ENCODE measurements at regions of chr12 and their contacts with region 1.

Region 1: GRCh38 chr12:12562585-12563261 is at the start of gene DUSP16:
- DNase-seq: peak; percentile 55 to 92 (median 77)
- ATAC-seq: peak; percentile 66 to 80 (median 69)
- H3K4me3 ChIP-seq: peak within 1 kb of the TSS; percentile 90 to 93
- H3K4me3 Mint-ChIP-seq: peak within 1 kb of the TSS; percentile 83 to 89 (median 85)
- H3K27ac ChIP-seq: peak within 1 kb of the TSS; percentile 100
- H3K27ac Mint-ChIP-seq: peak within 1 kb of the TSS; percentile 92 to 93
- H3K4me1 ChIP-seq: peaks cover 8 to 18% of the 10 kb centered on the region in 2 experiments
- H3K4me1 Mint-ChIP-seq: peaks cover 37 to 46% (median 40%) of the 10 kb centered on the region in 3 donors
- H3K27me3 ChIP-seq: no peaks in the 10 kb centered on the region
- H3K27me3 Mint-ChIP-seq: no peaks in the 10 kb centered on the region
- total RNA-seq, gene DUSP16: 44.6 to 72.3 (median 61.0) TPM

Region 2: DNA sequence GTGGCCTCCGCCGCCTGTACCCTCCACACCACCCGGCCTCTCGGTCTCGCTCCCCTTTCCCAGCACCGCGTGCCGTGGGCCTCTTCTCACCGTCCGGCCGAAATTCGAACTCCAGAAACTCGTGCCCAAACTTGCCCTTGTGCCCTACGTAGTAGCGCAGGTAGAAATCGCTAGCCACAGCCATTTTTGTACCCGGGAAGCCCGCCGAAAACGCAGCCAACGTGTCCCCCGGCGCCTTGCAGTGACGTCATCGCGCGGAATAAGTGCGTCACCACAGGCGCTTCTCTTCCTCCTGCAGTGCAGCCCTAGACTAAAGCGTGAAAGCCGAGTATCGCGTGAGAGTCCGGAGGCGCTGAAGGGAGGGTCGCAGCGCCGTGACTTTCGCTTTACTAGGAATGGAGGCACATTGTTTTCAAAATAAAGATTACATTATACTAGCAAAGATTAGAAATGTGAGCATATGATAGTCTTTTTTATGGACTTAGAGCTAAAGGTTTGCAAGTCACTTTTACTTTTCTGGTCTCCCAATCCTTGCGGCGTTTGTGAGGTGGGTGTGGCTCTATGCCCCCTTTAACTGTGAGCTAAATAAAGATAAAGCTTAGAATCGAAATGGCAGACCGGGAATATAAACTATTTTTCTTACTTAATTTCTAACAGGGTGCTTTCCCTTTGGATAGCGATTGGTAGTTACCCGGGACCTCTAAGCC is 1949.2 kb before region 1 on chr12 and contains the start of gene MAGOHB:
- CTCF ChIA-PET with region 1: no interaction called
- POLR2A ChIA-PET with region 1: interaction called in 1 of 2 experiments, 10 read pairs
- DNase-seq: peak; percentile 93 to 99 (median 97)
- ATAC-seq: peak; percentile 94 to 98 (median 96)
- H3K4me3 ChIP-seq: peak within 1 kb of the TSS; percentile 87 to 88
- H3K4me3 Mint-ChIP-seq: peak within 1 kb of the TSS; percentile 92 to 99 (median 97)
- H3K27ac ChIP-seq: peak within 1 kb of the TSS; percentile 94
- H3K27ac Mint-ChIP-seq: peak within 1 kb of the TSS; percentile 98 to 99
- H3K4me1 ChIP-seq: peaks cover 8 to 12% of the 10 kb centered on the region in 2 experiments
- H3K4me1 Mint-ChIP-seq: peaks cover 25 to 31% (median 29%) of the 10 kb centered on the region in 3 donors
- H3K27me3 ChIP-seq: no peaks in the 10 kb centered on the region
- H3K27me3 Mint-ChIP-seq: peaks cover 0 to 12% of the 10 kb centered on the region in 2 donors
- total RNA-seq, gene MAGOHB: 11.6 to 22.9 (median 20.3) TPM

Region 3: DNA sequence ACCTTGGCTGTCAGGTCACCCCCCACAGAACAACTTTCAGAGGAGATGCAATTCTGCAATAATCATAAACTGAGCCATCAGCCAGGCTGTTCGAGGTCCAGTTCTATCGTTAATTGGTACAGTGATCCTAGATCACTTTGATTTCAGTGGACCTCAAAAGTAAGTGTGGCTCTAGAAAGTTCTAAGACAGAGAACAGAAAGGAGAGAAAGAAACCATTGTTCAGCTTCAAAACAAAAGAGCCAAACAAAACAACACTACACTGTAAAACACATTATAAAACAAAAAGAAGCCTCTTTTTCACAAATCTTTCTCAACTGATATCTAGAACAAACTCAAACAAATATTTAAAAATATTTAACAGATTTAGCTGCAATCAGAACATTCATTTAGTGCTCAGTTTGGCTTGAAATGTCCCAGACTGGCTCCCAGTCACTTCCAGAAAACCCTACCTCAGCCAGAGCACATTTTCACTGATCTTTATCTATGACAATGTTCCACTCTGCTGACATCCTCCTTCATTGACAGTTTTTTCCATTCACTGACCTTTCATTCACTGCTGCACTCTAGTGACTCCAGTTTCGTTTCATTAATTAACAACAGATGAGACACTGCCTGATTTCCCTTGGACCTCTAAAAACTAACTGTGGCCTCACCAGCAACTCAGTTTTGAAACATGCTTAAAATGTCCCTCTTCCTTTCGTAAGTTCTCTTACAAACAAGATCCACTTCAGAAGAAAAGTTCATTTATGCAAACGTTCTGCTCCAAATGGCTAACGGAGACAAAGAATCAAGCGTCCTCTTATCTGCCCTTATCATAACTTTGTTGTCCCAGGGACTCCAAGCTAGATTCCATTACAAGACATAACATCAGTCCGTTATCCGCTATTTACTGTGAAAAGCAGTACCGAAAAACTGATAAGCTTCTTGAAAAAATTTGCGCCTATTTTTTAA is 56.9 kb before region 1 on chr12:
- CTCF ChIA-PET with region 1: interaction called in 1 of 2 experiments, 5 read pairs
- POLR2A ChIA-PET with region 1: interaction called in 1 of 2 experiments, 11 read pairs
- DNase-seq: no peak
- ATAC-seq: peak in 1 of 4 experiments; percentile 43
- H3K4me3 ChIP-seq: no peak overlapping the region
- H3K4me3 Mint-ChIP-seq: peak overlapping the region; percentile 30 to 52 (median 42)
- H3K27ac ChIP-seq: no peak overlapping the region
- H3K27ac Mint-ChIP-seq: peak overlapping the region; percentile 70 to 84
- H3K4me1 ChIP-seq: peaks cover 0 to 22% of the 10 kb centered on the region in 2 experiments
- H3K4me1 Mint-ChIP-seq: peaks cover 38 to 79% (median 48%) of the 10 kb centered on the region in 3 donors
- H3K27me3 ChIP-seq: no peaks in the 10 kb centered on the region
- H3K27me3 Mint-ChIP-seq: no peaks in the 10 kb centered on the region

Region 4: GRCh38 chr12:12606781-12607589 is 44.3 kb after region 1 on chr12:
- CTCF ChIA-PET with region 1: interaction called in 1 of 2 experiments, 10 read pairs
- POLR2A ChIA-PET with region 1: no interaction called
- DNase-seq: no peak
- ATAC-seq: no peak
- H3K4me3 ChIP-seq: no peak overlapping the region
- H3K4me3 Mint-ChIP-seq: peak overlapping the region in 1 of 3 donors; percentile 35
- H3K27ac ChIP-seq: no peak overlapping the region
- H3K27ac Mint-ChIP-seq: peak overlapping the region; percentile 54 to 77
- H3K4me1 ChIP-seq: peaks cover 5 to 8% of the 10 kb centered on the region in 2 experiments
- H3K4me1 Mint-ChIP-seq: peaks cover 25 to 29% (median 25%) of the 10 kb centered on the region in 3 donors
- H3K27me3 ChIP-seq: no peaks in the 10 kb centered on the region
- H3K27me3 Mint-ChIP-seq: no peaks in the 10 kb centered on the region

Region 5: GRCh38 chr12:13079440-13079906 is 516.8 kb after region 1 on chr12:
- CTCF ChIA-PET with region 1: no interaction called
- POLR2A ChIA-PET with region 1: no interaction called
- DNase-seq: no peak
- ATAC-seq: no peak
- H3K4me3 ChIP-seq: no peak overlapping the region
- H3K4me3 Mint-ChIP-seq: no peak overlapping the region
- H3K27ac ChIP-seq: no peak overlapping the region
- H3K27ac Mint-ChIP-seq: no peak overlapping the region
- H3K4me1 ChIP-seq: no peaks in the 10 kb centered on the region
- H3K4me1 Mint-ChIP-seq: no peaks in the 10 kb centered on the region
- H3K27me3 ChIP-seq: no peaks in the 10 kb centered on the region
- H3K27me3 Mint-ChIP-seq: no peaks in the 10 kb centered on the region

Measured in T-cell (primary cell).